Dorsolateral prefrontal cortex (tissue), 120 donors: ENCODE measurements at regions of chr3 and their contacts with region 1.

Region 1: DNA sequence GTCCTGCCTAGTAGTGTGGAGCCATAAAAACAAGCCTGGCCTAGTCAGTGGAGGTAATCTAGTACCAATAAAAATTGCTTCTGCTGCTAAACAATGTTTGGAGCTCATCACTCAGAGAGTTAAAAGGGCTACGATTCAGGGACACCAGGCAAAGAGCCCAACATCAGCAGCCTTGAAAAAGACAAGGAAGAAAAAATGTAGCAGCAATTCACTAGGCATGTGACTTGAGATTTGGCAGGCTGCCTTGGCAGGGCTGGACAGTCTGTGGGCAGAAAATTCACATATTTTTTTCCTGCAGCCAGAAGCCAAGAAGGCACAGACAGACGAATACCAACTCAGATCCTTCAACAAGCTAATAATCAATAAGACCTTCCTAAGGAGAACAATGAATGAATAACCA is 47.2 kb downstream of the IGSF11 start:
- DNase-seq: peak; percentile 32 to 92 (median 83)
- H3K4me3 ChIP-seq: peak overlapping the region in 7 of 59 donors; percentile 3 to 35 (median 22)
- H3K27ac ChIP-seq: peak overlapping the region; percentile 57 to 100 (median 97)
- H3K27me3 ChIP-seq: no peaks in the 10 kb centered on the region
- CTCF ChIP-seq: peak in 11 of 56 donors; percentile 4 to 36 (median 18)

Region 2: GRCh38 chr3:118973050-118973449 is 14.4 kb before region 1 on chr3:
- intact Hi-C with region 1: loop called in 1 of 2 experiments (anchors 2 kb)
- DNase-seq: peak; percentile 7 to 79 (median 70)
- H3K4me3 ChIP-seq: peak overlapping the region in 5 of 59 donors; percentile 4 to 40 (median 7)
- H3K27ac ChIP-seq: peak overlapping the region; percentile 0 to 93 (median 79)
- H3K27me3 ChIP-seq: no peaks in the 10 kb centered on the region
- CTCF ChIP-seq: peak in 6 of 56 donors; percentile 5 to 23 (median 13)

Region 3: GRCh38 chr3:119018690-119019463 is 31.4 kb after region 1 on chr3:
- intact Hi-C with region 1: loop called in 1 of 2 experiments (anchors 1 kb)
- DNase-seq: peak; percentile 26 to 83 (median 71)
- H3K4me3 ChIP-seq: peak overlapping the region in 4 of 59 donors; percentile 1 to 20 (median 16)
- H3K27ac ChIP-seq: peak overlapping the region in 55 of 59 donors; percentile 0 to 85 (median 70)
- H3K27me3 ChIP-seq: no peaks in the 10 kb centered on the region
- CTCF ChIP-seq: peak in 2 of 56 donors; percentile 18 to 29